ENCODE measurements at regions of chr19 and their contacts with region 1.

Region 1: DNA sequence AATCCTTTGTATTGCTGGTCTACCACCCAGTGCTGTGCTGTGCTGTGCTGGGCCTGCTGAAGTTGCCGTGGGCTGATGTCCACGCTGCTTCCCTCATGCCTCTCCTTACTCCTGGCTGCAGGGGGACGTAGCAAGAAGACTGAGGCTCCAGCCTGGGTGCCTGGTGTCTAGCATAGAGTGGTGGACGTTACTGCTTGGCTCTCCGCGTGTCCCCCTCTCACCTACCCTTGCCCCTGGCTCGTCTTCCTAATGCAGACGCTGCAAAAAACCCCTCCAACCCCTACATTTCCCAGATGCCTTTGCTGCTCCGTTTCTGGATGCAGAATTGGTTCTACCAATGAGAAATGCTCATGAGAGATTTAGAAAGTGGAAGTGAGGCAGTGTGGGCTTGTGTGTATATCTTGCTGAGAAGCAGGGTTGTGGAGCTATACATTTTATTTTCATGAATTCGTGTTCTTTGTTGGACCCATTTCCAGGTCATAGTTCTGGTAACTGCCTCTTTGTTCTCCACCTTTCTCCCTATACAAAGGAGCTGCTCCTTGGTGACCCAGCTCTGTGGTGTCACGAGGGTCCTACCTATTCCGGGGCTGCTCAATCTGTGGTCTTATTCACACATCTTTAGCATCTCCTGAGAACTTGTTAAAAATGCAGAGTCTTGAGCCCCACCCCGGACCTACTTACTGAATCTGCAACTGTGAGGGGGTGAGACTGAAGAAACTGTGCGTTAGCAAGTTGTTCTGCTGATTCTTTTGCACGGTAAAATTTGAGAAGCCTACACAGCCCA is 7.9 kb upstream of the DENND1C start:
- DNase-seq: peak in 1 of 10 donors; percentile 67

Region 2: DNA sequence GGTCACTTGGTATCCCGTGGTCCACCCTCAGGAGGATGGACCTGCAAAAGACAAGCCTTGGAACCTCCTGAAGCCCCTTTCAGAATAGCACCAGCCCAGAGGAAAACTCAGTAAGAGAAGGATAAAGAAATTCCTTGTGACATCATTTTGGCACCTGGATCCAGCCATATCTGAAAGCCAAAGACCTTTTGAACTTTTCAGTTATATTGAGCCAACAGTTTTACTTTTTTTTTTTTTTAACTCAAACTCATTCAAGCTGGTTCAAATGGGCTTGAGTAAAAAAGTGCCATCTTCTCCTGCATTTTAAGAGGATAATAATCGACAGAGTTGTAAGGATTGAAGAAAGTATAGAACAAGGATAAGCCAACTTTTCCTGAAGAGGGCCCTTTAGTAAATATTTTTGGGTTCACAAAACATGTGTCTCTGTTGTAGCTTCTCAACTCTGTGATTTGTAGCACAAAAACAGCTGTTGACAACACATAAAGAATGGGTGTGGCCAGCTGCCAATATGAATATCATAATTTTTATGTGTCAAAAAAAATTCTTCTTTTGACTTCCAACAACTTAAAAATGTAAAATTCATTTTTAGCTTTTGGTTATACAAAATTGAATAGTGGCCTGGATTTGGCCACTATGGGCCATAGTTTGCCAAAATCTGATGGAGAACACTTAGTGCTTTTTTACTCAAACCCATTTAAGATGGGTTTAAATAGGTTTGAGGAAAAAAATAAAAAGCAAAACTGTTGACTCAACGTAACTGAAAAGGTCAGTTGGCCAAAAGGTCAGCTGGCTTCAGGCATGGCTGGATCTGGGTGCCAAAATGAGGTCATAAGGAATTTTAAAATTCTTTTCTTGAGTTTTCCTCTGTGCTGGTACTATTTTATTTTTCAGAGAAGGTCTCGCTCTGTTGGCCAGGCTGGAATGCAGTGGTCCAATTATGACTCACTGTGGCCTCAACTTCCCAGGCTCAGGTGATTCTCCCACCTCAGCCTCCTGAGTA is 303.3 kb before region 1 on chr19:
- intact Hi-C with region 1: no loop called
- DNase-seq: no peak

Region 3: GRCh38 chr19:6412447-6413091 is 76.9 kb before region 1 on chr19:
- intact Hi-C with region 1: loop called (anchors 10 kb)
- DNase-seq: peak in 1 of 10 donors; percentile 85

Region 4: DNA sequence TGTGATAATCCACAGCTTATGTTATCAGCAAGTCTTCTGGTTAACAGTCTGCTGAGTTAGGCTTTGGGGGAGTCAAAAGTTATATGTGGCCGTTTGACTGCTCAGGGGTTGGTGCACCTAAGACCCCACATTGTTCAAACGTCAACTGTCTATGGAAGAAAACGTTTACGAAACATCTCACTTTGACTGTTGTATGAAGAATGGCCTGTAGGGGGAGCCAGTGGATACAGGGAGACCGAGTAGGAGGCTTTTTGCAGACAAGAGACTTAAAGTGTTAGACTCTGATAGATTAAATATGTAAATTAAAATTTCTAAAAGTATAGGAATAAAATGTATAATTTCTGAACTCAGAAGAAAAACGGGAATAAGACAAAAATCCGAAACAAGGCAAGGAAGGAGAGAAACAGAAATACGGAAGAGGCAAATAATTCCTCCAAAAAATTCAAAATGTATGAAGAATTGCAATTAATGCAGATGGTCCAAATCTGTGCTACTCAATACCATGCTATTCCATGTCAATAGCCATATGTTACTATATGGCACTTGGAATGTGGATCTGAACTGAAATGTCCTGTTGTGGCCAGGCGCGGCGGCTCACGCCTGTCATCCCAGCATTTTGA is 142.6 kb after region 1 on chr19:
- intact Hi-C with region 1: no loop called
- DNase-seq: peak in 5 of 10 donors; percentile 13 to 74 (median 57)

Measured in posterior cingulate gyrus (tissue), 11 donors.